Activated CD4-positive, alpha-beta memory T cell treated with anti-CD3 and anti-CD28 coated beads for 36 hours (primary cell): ENCODE measurements at regions of chr5 and their contacts with region 1.

Region 1: DNA sequence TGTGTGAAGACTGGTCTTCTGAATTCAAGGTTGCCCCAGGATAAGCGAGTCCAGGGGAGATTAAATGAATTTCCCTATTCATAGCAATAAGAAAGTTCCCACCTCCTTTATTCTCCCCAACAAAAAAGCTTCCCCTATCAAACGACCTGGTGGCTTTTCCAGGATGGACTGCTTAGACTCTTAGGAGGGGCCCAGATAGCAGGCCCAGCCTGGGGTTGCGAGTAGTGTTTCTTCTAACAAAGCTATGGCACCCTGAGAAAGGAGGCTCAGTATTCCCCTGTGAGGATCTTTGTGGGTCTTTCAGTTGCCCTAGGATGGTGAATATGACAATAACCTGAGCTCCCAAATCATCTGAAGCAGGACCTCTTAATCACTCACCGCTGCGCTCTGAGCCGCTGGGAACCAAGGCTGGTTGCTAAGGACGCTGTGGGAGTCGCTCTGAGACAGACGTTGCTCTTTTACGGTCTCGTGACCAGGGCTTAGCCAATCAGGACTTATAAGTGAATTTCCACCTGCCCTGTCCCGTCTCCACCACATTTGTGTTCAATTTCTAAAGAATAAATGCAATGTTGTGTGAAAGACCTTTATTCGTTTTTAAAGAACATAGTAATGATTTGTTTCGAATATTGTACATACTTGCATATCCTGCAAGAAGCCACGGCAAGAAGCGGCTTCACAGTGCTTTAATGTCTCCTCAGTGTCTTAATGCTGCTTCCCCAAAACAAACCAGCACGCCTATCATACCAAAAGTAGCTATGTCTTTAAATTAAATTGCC is at the start of gene TMEM232:
- DNase-seq: peak; percentile 86
- H3K4me3 Mint-ChIP-seq: peak within 1 kb of the TSS; percentile 83
- H3K27ac Mint-ChIP-seq: peak within 1 kb of the TSS; percentile 33
- H3K4me1 Mint-ChIP-seq: peaks cover 3% of the 10 kb centered on the region
- H3K27me3 Mint-ChIP-seq: no peaks in the 10 kb centered on the region
- total RNA-seq, gene TMEM232: 0.74 to 0.92 TPM

Region 2: GRCh38 chr5:110738812-110739651 is 12.6 kb after region 1 on chr5 and contains the start of gene SLC25A46:
- CTCF ChIA-PET with region 1: interaction called, 13 read pairs
- POLR2A ChIA-PET with region 1: interaction called, 5 read pairs
- intact Hi-C with region 1: loop called (anchors 1 kb)
- DNase-seq: peak; percentile 93
- H3K4me3 Mint-ChIP-seq: peak within 1 kb of the TSS; percentile 91
- H3K27ac Mint-ChIP-seq: peak within 1 kb of the TSS; percentile 84
- H3K4me1 Mint-ChIP-seq: peaks cover 34% of the 10 kb centered on the region
- H3K27me3 Mint-ChIP-seq: peaks cover 5% of the 10 kb centered on the region
- total RNA-seq, gene SLC25A46: 35.4 to 37.6 TPM

Region 3: DNA sequence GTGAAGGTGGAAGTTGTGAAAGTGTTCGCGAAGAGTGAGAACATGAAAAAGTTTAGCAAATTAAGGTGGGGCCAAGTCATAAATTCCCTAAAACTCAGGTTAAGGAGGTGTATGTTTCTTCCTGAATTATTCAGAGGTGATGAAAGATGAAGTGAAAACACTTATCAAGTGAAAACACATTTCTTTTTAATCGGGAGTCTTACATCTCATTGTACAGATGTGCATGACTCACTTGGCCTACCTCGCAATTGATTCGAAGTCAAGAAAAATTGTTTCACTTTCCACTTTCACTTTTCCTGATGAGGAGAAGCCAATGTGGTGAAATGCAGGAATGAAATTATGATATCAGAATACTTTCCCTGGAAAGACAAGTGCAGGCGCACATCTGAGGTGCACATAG is 91.0 kb after region 1 on chr5:
- CTCF ChIA-PET with region 1: no interaction called
- POLR2A ChIA-PET with region 1: no interaction called
- intact Hi-C with region 1: no loop called
- DNase-seq: no peak
- H3K4me3 Mint-ChIP-seq: no peak overlapping the region
- H3K27ac Mint-ChIP-seq: no peak overlapping the region
- H3K4me1 Mint-ChIP-seq: no peaks in the 10 kb centered on the region
- H3K27me3 Mint-ChIP-seq: peaks cover 1% of the 10 kb centered on the region